BJ (cell line): ENCODE measurements at regions of chr5 and their contacts with region 1.

Region 1: GRCh38 chr5:177357459-177358351 is at the start of gene RGS14:
- DNase-seq: no peak
- H3K4me3 ChIP-seq: no peak within 1 kb of the TSS
- H3K27me3 ChIP-seq: peaks cover 5% of the 10 kb centered on the region
- CTCF ChIP-seq: no peak
- polyA plus RNA-seq, gene RGS14: 4.1 and 6.0 TPM in 2 replicates

Region 2: GRCh38 chr5:176719113-176719739 is 638.5 kb before region 1 on chr5:
- CTCF ChIA-PET with region 1: no interaction called
- POLR2A ChIA-PET with region 1: interaction called, 12 read pairs
- DNase-seq: no peak
- H3K4me3 ChIP-seq: no peak overlapping the region
- H3K27me3 ChIP-seq: peaks cover 20% of the 10 kb centered on the region
- CTCF ChIP-seq: no peak

Region 3: DNA sequence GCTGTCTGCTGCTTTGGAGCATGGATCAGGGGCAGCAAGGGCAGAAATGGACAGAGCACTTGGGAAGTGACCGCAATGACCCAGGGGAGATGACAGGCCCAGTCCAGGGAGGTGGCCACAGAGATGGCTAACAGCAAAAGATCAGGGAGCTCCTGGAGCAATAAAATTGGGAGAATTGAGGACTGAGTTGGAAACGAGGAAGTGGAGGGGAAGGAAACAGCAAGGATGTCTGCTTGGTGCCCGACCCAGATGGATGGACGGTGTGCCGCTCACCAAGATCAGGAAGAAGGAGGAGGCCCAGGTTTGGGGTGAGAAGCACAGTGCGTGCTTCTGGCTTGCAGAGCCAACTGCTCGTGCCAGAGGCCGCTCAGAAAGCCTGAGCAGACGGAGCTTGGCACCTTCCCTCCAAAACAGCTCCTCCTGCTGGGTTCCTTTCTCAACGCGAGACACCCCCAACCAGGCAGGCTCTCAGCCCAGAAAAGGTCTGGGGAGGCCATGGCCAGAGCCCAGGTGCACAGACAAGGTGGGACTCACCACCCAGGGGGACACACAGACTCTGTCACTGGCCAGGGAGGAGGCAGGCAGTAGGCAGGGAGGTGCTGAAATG is 24.8 kb after region 1 on chr5:
- CTCF ChIA-PET with region 1: no interaction called
- POLR2A ChIA-PET with region 1: no interaction called
- DNase-seq: no peak
- H3K4me3 ChIP-seq: no peak overlapping the region
- H3K27me3 ChIP-seq: peaks cover 25% of the 10 kb centered on the region
- CTCF ChIP-seq: peak; percentile 41; the same call in 1 of the 2 replicates

Region 4: GRCh38 chr5:177434437-177434836 is 76.7 kb after region 1 on chr5:
- CTCF ChIA-PET with region 1: no interaction called
- POLR2A ChIA-PET with region 1: no interaction called
- DNase-seq: no peak
- H3K4me3 ChIP-seq: no peak overlapping the region
- H3K27me3 ChIP-seq: no peaks in the 10 kb centered on the region
- CTCF ChIP-seq: no peak

Region 5: GRCh38 chr5:177537389-177538361 is 180.0 kb after region 1 on chr5:
- CTCF ChIA-PET with region 1: no interaction called
- POLR2A ChIA-PET with region 1: no interaction called
- DNase-seq: peak; percentile 52
- H3K4me3 ChIP-seq: no peak overlapping the region
- H3K27me3 ChIP-seq: no peaks in the 10 kb centered on the region
- CTCF ChIP-seq: no peak